CD4-positive, alpha-beta T cell (primary cell): ENCODE measurements at regions of chr9 and their contacts with region 1.

Region 1: DNA sequence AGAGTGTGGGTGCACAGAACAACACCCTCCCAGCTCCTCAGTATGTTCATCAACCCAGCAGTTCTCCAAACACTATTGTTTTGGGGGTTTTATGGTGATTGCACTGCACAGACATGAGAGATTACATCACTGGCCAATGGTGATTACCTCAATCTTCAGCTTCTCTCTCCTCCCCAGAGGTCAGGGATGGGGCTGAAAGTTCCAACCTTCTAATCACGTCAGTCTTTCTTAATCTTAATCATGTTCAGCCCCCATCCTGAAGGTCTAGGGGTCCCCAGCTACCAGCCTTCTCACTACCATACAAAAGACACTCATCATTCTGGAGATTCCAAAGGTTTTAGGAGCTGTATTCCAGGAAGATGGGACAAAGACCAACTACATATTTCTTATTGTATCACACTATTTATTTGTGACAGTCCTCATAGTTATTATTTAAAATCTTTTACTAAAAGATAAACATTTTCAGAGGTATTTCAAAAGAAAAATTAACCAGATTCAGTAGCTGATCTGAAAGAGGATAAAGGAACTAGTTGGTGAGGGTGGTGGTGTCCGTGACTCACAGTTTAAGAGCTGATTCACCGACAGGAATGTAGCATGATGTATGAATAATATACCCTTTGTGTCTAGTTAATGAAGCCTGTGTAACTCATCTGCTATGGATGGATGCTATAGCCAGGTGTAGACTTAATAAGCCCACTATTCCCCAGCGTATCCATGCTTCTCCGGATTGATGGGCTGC is 35.6 kb downstream of the RASEF start:
- DNase-seq: no peak
- ATAC-seq: no peak
- H3K4me3 ChIP-seq: no peak overlapping the region
- H3K4me3 Mint-ChIP-seq: no peak overlapping the region
- H3K27ac ChIP-seq: no peak overlapping the region
- H3K27ac Mint-ChIP-seq: no peak overlapping the region
- H3K4me1 ChIP-seq: no peaks in the 10 kb centered on the region
- H3K4me1 Mint-ChIP-seq: no peaks in the 10 kb centered on the region
- H3K27me3 ChIP-seq: no peaks in the 10 kb centered on the region
- H3K27me3 Mint-ChIP-seq: no peaks in the 10 kb centered on the region
- CTCF ChIP-seq: no peak

Region 2: DNA sequence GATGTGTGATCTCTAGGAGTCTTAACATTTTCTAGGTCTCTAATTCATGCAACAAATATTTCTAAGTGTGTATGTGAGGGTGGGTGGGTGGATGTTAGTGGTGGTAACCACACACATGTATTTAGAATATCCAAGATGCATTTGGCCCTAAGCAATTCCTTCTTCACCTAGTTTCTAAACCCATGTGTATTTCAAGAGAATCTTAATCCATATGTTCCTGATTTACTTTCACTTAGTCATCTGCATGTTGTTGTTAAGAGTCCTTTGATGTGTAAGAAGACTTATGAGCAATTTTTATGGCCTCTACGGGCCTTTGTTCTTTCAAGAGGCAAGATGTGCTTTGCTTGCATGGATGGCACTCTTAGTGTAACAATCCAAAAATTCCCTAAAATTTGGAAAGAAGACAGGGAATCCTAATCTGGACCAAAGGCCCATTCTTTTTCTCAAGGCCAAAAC is 756.2 kb before region 1 on chr9:
- CTCF ChIA-PET with region 1: no interaction called
- POLR2A ChIA-PET with region 1: no interaction called
- intact Hi-C with region 1: no loop called
- DNase-seq: no peak
- ATAC-seq: no peak
- H3K4me3 ChIP-seq: no peak overlapping the region
- H3K4me3 Mint-ChIP-seq: no peak overlapping the region
- H3K27ac ChIP-seq: no peak overlapping the region
- H3K27ac Mint-ChIP-seq: no peak overlapping the region
- H3K4me1 ChIP-seq: no peaks in the 10 kb centered on the region
- H3K4me1 Mint-ChIP-seq: no peaks in the 10 kb centered on the region
- H3K27me3 ChIP-seq: no peaks in the 10 kb centered on the region
- H3K27me3 Mint-ChIP-seq: no peaks in the 10 kb centered on the region
- CTCF ChIP-seq: no peak

Region 3: DNA sequence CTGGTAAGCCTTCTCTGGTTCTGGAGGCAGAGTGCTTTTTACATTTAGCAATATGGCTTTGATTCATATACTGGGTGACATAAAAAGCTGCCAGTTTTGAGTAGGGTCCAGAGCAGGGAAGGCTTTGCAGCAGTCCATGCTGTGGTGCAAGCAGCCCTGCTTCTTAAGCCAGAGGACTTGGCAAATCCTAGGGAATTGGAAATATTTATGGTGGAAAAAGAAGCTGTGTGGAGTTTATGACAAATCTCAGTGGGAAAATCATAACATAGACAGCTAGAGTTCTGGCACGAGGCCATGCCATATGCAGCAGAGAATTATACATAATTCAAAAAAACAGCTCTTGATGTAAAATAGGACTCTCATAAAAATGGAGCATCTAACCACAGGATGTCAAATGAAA is 500.7 kb before region 1 on chr9:
- CTCF ChIA-PET with region 1: no interaction called
- POLR2A ChIA-PET with region 1: no interaction called
- intact Hi-C with region 1: no loop called
- DNase-seq: no peak
- ATAC-seq: no peak
- H3K4me3 ChIP-seq: no peak overlapping the region
- H3K4me3 Mint-ChIP-seq: no peak overlapping the region
- H3K27ac ChIP-seq: no peak overlapping the region
- H3K27ac Mint-ChIP-seq: no peak overlapping the region
- H3K4me1 ChIP-seq: no peaks in the 10 kb centered on the region
- H3K4me1 Mint-ChIP-seq: no peaks in the 10 kb centered on the region
- H3K27me3 ChIP-seq: no peaks in the 10 kb centered on the region
- H3K27me3 Mint-ChIP-seq: no peaks in the 10 kb centered on the region
- CTCF ChIP-seq: no peak

Region 4: GRCh38 chr9:82894961-82895821 is 132.1 kb before region 1 on chr9:
- CTCF ChIA-PET with region 1: no interaction called
- POLR2A ChIA-PET with region 1: no interaction called
- intact Hi-C with region 1: no loop called
- DNase-seq: no peak
- ATAC-seq: no peak
- H3K4me3 ChIP-seq: no peak overlapping the region
- H3K4me3 Mint-ChIP-seq: no peak overlapping the region
- H3K27ac ChIP-seq: no peak overlapping the region
- H3K27ac Mint-ChIP-seq: no peak overlapping the region
- H3K4me1 ChIP-seq: no peaks in the 10 kb centered on the region
- H3K4me1 Mint-ChIP-seq: no peaks in the 10 kb centered on the region
- H3K27me3 ChIP-seq: no peaks in the 10 kb centered on the region
- H3K27me3 Mint-ChIP-seq: no peaks in the 10 kb centered on the region
- CTCF ChIP-seq: no peak

Region 5: DNA sequence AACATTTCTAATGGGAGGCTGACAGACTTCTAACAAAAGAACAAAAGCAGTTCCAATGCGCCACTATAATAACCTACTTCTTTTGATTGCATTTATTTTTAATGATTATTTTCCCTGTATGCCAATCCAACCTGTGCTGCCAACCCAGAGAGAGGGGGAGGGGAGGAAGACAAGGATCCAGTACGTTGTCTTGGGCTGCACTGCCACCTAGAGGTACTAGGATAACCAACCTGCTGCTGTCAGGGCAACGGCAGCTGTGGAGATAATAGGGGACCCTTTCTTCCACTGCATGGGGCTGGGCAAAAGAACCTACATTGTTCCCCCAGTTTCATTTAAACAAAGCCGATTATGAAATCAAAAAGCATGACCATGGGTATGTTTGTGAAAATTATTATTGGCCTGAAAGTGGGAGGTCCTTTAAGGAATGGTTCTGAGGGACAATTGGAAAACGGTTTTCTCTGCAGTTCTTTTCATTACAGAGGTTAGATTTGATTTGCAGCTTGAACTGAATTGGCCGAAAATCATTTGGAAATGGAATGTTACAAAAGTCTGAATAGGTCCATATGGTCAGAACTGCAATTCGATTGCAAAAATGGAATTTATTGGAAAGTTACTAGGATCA is 65.7 kb before region 1 on chr9:
- CTCF ChIA-PET with region 1: no interaction called
- POLR2A ChIA-PET with region 1: no interaction called
- intact Hi-C with region 1: loop called in 1 of 2 experiments (anchors 10 kb)
- DNase-seq: peak in 8 of 14 experiments; percentile 1 to 52 (median 12)
- ATAC-seq: no peak
- H3K4me3 ChIP-seq: no peak overlapping the region
- H3K4me3 Mint-ChIP-seq: no peak overlapping the region
- H3K27ac ChIP-seq: no peak overlapping the region
- H3K27ac Mint-ChIP-seq: no peak overlapping the region
- H3K4me1 ChIP-seq: no peaks in the 10 kb centered on the region
- H3K4me1 Mint-ChIP-seq: no peaks in the 10 kb centered on the region
- H3K27me3 ChIP-seq: no peaks in the 10 kb centered on the region
- H3K27me3 Mint-ChIP-seq: no peaks in the 10 kb centered on the region
- CTCF ChIP-seq: peak; percentile 25